Right ventricle myocardium superior (tissue), 1 donor: ENCODE measurements at regions of chr17 and their contacts with region 1.

Region 1: GRCh38 chr17:76304226-76305134 is 3.6 kb downstream of the QRICH2 start:
- DNase-seq: no peak
- ATAC-seq: no peak

Region 2: DNA sequence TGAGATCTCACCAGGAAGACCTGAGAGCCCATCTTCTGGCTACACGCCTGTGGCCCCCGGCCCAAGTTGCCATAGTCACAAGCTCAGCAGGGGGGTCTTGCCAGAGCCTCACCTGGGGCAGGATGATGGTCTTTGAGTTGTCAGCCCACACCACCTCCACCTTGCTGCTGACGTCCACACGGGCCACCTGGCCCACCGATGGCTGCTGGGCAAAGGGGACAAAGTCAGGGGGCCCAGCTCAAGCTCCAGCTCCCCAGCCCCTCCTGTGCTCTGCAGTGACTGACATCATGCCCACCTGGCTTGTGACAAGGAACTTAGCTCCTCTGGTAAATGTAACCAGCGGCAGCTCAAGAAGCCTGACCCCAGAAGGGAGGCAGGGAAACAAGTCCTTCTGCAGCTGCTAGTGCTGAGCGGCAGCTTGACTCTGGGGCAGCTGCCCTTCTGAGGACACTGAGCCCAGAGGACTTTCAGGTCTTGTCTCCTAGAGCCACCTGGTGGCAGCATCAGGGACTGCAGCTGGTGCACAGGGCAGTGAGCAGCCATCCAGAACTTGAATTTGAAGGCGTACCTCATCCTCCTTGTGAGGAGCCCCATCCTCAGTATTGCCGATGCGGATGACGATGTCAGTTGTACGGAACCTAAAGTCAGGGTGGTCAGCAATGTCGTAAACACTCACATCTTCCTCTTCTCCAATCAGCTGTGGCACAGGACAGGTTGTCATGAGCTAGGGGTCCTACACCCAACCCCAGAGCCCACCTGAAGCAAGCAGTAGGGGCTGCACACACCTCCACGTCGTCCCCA is 93.4 kb after region 1 on chr17:
- intact Hi-C with region 1: loop called (anchors 2 kb)
- DNase-seq: peak; percentile 94
- ATAC-seq: peak; percentile 84